ENCODE measurements at regions of chr11 and their contacts with region 1.

Region 1: DNA sequence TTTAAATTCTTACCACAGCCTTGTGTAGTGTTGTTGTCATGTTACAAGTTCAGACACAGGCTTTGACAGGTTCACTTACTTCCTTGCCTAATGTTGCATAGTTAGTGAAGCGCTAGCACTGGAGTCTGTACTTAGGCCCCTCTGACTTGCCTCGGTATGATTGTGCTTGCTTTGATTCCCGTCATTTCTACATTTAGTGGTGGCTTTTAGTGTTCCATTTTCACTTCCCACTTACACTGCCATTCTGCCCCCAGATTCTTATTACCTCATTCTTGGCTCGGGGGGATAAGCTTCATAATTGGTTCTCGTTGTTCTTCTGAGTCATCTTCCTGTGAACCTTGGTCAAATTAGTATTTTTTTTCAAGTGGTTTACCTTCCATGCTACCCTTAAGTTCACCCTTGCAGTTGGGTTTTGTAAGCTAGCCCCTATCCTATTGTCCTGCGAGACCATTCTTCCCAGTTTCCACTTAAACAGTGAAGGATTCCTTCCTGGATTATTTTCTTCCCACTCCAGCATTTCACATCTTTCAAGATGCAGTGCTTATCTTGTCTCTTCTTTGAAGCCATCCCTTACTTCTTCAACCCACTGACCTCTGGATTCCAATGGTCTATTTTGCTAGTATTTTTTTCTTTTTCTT is 68.7 kb downstream of the DDX10 start:
- DNase-seq: peak; percentile 18
- H3K4me3 Mint-ChIP-seq: peak overlapping the region; percentile 56
- H3K27ac Mint-ChIP-seq: peak overlapping the region; percentile 86
- H3K4me1 Mint-ChIP-seq: peaks cover 50% of the 10 kb centered on the region
- H3K27me3 Mint-ChIP-seq: no peaks in the 10 kb centered on the region

Region 2: DNA sequence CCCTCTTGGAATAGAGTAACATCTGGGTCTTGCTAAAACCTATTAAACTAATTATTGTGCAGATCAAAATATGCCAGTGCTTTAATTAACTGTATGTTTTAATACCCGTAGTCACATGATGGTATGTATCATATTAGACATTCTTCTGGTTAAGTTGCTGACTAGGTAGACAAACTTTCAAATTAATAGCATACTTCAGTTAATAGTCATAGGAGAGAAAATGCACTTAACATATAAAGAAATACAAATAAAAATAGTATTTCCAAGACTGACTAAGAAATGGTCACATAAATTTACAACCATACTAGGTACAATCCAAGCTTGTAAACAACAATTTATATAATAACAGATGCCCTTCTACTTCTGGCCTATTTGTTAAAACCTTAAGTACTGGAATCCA is 132.4 kb before region 1 on chr11:
- intact Hi-C with region 1: no loop called
- DNase-seq: no peak
- H3K4me3 Mint-ChIP-seq: no peak overlapping the region
- H3K27ac Mint-ChIP-seq: no peak overlapping the region
- H3K4me1 Mint-ChIP-seq: no peaks in the 10 kb centered on the region
- H3K27me3 Mint-ChIP-seq: peaks cover 31% of the 10 kb centered on the region

Region 3: DNA sequence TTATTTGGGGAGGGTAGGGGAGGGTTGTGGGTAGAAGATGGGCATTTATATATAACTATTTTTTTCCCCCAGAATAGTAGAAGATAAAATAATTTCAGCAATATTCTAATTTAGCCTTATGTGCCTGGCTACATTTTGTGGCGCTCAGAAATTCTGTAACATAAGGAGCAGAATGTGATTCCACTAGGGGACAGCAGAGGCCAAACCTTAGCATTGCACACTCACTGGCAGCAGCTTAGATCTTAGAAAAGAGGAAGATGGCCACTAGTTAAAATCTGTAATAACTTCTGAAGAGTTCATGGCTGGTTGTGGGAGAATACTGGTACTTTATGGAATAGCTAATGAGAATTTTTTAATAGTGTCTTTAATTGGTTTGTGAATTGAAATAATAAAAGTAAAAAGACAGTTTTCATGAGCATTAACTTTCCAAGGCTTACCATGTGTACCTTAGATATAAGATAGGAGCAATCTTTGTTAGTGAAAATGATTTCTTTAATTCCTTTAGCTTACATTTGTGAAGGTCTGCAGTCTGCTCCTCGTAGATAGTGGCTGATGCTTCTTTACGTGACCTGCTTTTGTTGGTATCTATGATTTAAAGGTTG is 35.6 kb before region 1 on chr11:
- intact Hi-C with region 1: loop called (anchors 1 kb)
- DNase-seq: peak; percentile 13
- H3K4me3 Mint-ChIP-seq: no peak overlapping the region
- H3K27ac Mint-ChIP-seq: no peak overlapping the region
- H3K4me1 Mint-ChIP-seq: peaks cover 8% of the 10 kb centered on the region
- H3K27me3 Mint-ChIP-seq: no peaks in the 10 kb centered on the region

Region 4: DNA sequence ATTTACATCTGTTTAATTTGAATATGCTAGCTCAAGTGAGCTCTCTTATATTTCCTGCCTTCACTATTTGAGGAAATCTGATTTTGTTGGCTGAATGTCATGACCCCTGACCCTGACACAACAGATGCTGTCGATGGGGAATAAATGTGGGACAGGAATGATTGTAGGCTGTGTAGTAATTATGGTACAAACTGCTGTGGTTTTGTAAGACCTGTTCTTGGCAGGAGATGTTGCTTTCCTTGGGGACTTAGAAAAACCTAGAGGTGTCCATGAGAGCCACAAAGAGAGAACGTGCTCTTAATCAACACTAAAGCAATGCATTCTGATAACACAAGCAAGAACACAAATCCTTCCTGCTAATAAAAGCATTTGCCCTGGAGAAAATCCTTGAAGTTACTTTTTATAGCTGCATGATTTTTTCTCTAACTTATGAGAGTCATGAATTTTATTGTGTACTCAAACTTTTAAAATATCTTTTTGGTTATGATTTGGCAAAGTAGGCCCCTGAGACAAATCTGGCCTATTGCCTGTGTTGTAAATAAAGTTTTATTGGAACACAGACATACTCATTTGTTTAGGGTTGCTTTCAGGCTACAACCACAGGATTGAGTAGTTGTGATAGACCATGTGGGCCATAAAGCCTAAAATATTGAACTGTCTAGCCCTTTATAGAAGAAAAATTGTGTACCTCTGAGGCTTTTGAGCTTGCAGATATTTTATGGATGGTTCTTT is 21.5 kb after region 1 on chr11:
- intact Hi-C with region 1: loop called (anchors 1 kb)
- DNase-seq: no peak
- H3K4me3 Mint-ChIP-seq: no peak overlapping the region
- H3K27ac Mint-ChIP-seq: no peak overlapping the region
- H3K4me1 Mint-ChIP-seq: peaks cover 27% of the 10 kb centered on the region
- H3K27me3 Mint-ChIP-seq: no peaks in the 10 kb centered on the region

Region 5: DNA sequence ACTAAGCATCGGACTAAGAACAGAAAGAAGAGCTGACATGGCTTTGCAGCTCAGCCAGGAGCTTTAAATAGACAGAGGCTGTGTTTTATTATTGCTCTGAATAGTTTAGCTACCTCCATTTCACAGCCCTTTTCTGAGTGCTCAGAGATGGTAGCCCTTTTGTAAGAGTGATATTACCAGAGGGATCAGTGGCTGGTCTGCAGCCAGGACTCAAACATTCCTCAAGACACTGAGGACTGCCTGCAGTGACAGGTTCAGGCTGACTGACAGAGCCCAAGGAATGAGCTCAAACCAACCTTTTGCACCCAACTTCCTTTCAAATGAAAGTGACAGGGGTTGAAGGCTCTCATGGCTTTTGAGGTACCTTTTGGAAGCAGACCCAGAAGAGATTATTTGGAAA is 120.3 kb after region 1 on chr11:
- intact Hi-C with region 1: loop called (anchors 5 kb)
- DNase-seq: no peak
- H3K4me3 Mint-ChIP-seq: peak overlapping the region; percentile 74
- H3K27ac Mint-ChIP-seq: peak overlapping the region; percentile 57
- H3K4me1 Mint-ChIP-seq: peaks cover 26% of the 10 kb centered on the region
- H3K27me3 Mint-ChIP-seq: no peaks in the 10 kb centered on the region

Measured in activated T-helper 2 cell treated with anti-CD3 and anti-CD28 coated beads, Interferon-gamma antibody, Interleukin-2, Interleukin-4, amounts not matched to agents 10 μg/mL and 5 μg/mL and 100 μg/mL, durations not matched to agents 14 hours and 24 hours and 36 hours (primary cell).